Ovary (tissue), 10 donors: ENCODE measurements at regions of chr3 and their contacts with region 1.

Region 1: DNA sequence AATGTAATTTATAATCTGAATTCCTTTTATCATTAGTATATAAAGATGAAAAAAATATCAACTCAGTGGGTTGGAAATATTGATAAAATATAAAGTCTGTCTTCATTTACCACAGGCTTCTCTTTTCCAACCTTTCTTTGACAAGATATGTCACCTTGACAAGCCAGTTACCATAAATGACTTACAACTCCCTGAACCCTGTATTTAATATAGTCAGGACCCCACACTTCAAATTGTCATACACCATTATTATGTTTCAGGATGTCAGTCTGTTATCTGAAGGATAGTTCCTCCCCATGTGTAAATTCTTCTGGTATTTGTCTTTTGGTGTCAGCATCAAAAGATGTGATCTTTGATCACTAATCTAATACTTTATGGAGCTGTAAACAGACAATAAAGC is 503.4 kb upstream of the BCHE start:
- DNase-seq: no peak
- H3K4me3 ChIP-seq: no peak overlapping the region
- H3K27ac ChIP-seq: no peak overlapping the region
- H3K4me1 ChIP-seq: no peaks in the 10 kb centered on the region
- H3K27me3 ChIP-seq: no peaks in the 10 kb centered on the region
- CTCF ChIP-seq: no peak
- EP300 ChIP-seq: no peak
- POLR2A ChIP-seq: no peak

Region 2: GRCh38 chr3:167084545-167084944 is 743.9 kb after region 1 on chr3:
- intact Hi-C with region 1: loop called in 1 of 4 experiments (anchors 5 kb)
- DNase-seq: no peak
- H3K4me3 ChIP-seq: no peak overlapping the region
- H3K27ac ChIP-seq: no peak overlapping the region
- H3K4me1 ChIP-seq: no peaks in the 10 kb centered on the region
- H3K27me3 ChIP-seq: no peaks in the 10 kb centered on the region
- CTCF ChIP-seq: no peak
- EP300 ChIP-seq: no peak
- POLR2A ChIP-seq: no peak